Motor neuron (in vitro differentiated cells): ENCODE measurements at regions of chr1 and their contacts with region 1.

Region 1: DNA sequence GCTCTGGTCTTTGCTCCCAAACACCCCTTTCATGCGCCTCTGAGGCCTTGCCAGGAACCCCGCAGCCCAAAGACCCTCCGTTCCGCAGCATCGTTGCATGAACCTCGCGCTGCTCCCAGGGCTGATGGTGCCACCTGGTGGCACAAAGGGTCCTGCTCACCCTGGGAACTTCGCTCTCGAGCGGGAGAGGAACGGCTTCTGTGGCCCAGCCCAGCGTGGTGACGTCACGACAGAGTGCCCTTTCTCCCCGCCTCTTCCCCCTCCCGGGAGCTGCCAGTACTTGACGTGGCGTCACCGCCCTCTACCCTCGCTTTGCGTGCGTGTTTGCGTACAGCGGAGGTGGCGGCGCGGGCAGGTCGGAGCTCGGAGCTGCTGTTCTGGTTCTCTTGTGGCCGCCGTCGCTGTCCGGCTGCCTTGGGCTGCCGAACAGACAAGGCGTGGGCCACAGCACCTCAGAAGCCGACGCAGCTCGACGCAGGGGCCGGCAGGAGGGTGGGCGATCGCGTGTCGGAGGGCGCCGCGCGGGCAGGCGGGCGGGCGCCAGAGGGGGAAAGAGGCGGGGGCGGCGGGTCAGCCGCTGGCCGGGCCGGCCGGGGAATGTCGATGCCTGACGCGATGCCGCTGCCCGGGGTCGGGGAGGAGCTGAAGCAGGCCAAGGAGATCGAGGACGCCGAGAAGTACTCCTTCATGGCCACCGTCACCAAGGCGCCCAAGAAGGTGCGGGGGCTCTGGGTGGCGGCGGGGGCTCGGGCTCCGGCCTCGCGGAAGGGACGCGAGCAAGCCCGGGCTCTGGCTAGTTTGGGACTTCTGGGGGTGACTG is at the start of gene AHCYL1:
- ATAC-seq: peak; percentile 92 to 96 (median 95)
- H3K4me3 ChIP-seq: peak within 1 kb of the TSS; percentile 63 to 91 (median 75)
- H3K27ac ChIP-seq: peak within 1 kb of the TSS; percentile 91 to 93
- H3K4me1 ChIP-seq: peaks cover 24 to 26% of the 10 kb centered on the region in 2 donors
- total RNA-seq, gene AHCYL1: 33.7 to 96.8 (median 56.7) TPM

Region 2: GRCh38 chr1:109548321-109549267 is 436.1 kb before region 1 on chr1 and contains the start of gene GNAI3:
- in situ Hi-C with region 1: loop called in 6 of 9 experiments (anchors 10 to 25 kb)
- ATAC-seq: peak; percentile 89 to 99 (median 98)
- H3K4me3 ChIP-seq: peak within 1 kb of the TSS; percentile 81 to 97 (median 90)
- H3K27ac ChIP-seq: peak within 1 kb of the TSS; percentile 90 to 93
- H3K4me1 ChIP-seq: peaks cover 15 to 35% of the 10 kb centered on the region in 2 donors
- total RNA-seq, gene GNAI3: 8.8 to 15.5 (median 13.9) TPM

Region 3: DNA sequence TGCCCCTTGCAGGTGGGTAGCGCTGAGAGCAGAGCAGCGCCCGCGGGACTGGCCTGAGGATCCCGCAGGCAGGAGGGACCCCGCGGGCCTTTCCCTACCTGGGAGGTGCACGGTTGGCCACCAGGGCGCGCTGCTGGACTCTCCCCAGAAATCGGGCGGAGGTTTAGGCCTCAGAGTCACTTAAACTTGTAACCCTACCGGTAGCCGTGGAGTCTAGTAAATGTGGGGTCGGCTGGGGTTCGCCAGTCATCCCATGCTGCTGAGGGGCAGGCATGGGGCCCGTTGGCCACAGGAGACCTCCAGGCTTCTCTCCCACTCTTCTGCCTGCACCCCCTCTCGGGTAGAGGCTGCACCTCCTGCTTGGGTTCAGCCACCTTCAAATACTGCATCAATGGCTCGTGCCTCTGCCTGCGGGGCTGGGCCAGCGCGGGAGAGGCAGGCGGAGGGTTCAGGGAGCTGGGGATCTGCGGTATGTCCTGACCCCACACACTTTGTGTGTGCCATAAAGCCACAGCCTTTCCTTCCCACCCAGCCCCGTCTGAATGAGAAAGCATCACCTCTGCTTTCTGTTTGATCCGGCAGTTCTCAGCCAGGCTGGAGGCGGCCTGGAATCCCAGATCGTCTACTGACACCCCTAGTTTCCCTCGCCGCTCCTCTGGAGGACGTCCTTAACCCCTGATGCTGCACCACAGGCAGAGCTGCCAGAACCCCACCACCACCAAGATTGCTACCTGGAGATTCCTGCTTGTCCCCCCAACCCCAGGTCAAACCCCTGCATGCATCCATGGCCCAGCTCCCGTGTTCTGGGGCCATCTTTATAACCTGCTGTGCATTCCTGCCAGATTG is 341.1 kb before region 1 on chr1:
- in situ Hi-C with region 1: loop called in 3 of 9 experiments (anchors 10 to 25 kb)
- ATAC-seq: peak; percentile 85 to 94 (median 90)
- H3K4me3 ChIP-seq: no peak overlapping the region
- H3K27ac ChIP-seq: no peak overlapping the region
- H3K4me1 ChIP-seq: peaks cover 0 to 3% of the 10 kb centered on the region in 2 donors

Region 4: DNA sequence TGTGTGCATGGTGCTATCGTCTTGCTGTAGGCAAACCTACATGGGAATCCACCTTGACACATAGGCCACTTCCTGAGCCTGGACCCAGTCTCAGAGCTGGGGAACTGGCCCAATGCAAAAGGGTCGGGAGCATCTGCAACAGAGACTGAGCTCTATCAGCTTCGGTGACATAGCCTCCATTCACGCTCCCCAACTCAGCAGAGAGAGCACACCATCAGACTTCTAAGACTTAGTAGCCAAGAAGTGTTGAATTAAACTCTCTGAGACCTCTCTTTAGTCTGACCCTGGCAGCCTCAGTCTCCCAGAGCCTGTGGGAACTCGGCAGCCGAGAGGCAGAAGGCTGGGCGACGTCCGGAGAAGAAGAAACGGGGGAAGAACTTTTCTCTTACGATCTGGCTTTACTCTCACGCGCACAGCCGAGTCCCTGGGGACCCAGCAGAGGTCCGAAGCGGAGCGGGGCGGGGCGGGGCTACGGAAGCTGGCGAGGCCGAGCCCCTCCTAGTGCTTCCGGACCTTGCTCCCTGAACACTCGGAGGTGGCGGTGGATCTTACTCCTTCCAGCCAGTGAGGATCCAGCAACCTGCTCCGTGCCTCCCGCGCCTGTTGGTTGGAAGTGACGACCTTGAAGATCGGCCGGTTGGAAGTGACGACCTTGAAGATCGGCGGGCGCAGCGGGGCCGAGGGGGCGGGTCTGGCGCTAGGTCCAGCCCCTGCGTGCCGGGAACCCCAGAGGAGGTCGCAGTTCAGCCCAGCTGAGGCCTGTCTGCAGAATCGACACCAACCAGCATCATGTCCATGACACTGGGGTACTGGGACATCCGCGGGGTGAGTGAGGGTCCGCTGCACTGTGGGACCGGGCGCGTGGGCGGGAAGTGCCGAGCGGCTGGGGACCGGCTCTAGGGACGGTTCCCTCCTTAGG is 328.8 kb before region 1 on chr1 and contains the start of gene GSTM4:
- in situ Hi-C with region 1: loop called in 1 of 9 experiments (anchors 10 kb)
- ATAC-seq: peak; percentile 87 to 97 (median 91)
- H3K4me3 ChIP-seq: peak within 1 kb of the TSS; percentile 33 to 52 (median 43)
- H3K27ac ChIP-seq: no peak within 1 kb of the TSS
- H3K4me1 ChIP-seq: peaks cover 19 to 37% of the 10 kb centered on the region in 2 donors
- total RNA-seq, gene GSTM4: 6.5 to 46.1 (median 9.1) TPM

Region 5: GRCh38 chr1:110087812-110088738 is 103.4 kb after region 1 on chr1:
- in situ Hi-C with region 1: loop called in 1 of 9 experiments (anchors 25 kb)
- ATAC-seq: peak; percentile 78 to 86 (median 83)
- H3K4me3 ChIP-seq: no peak overlapping the region
- H3K27ac ChIP-seq: no peak overlapping the region
- H3K4me1 ChIP-seq: peaks cover 0 to 12% of the 10 kb centered on the region in 2 donors